ENCODE measurements at regions of chr3 and their contacts with region 1.

Region 1: DNA sequence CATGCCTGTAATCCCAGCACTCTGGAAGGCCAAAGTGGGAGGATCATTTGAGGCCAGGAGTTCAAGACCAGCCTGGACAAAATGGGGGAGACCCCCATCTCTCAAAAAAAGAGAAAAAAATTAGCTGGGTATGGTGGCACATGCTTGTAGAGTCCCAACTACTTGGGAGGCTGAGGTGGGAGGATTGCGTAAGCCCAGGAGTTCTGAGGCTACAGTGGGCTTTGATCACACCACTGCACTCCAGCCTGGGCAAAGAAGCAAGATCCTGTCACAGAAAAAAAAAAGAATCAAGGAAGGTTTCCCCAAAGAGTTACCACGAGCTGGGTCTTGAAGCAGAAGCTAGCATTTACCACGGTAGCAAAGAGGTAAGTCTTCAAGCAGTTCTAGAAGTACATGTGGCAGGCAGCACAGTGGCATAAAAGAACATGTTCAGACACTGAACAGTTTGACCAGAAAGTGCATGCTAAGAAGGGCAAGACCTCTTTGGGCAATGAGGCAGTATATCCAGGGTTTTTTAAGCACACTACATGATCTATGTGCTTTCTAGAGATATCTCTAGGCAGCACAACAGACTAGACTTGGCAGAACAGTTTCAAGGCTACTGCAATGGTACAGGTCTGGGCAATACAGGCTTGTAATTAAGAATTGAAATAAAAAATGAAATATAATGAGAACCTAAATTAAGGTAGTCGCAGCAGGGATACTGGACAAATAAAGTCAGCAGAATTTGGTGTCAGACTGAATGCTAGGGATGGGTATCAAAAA is 418.5 kb downstream of the SHQ1 start:
- DNase-seq: no peak
- H3K4me3 ChIP-seq: no peak overlapping the region
- H3K27ac ChIP-seq: no peak overlapping the region
- H3K4me1 ChIP-seq: peaks cover 0 to 74% (median 18%) of the 10 kb centered on the region in 4 donors
- H3K27me3 ChIP-seq: no peaks in the 10 kb centered on the region
- CTCF ChIP-seq: no peak
- EP300 ChIP-seq: no peak
- POLR2A ChIP-seq: no peak

Region 2: DNA sequence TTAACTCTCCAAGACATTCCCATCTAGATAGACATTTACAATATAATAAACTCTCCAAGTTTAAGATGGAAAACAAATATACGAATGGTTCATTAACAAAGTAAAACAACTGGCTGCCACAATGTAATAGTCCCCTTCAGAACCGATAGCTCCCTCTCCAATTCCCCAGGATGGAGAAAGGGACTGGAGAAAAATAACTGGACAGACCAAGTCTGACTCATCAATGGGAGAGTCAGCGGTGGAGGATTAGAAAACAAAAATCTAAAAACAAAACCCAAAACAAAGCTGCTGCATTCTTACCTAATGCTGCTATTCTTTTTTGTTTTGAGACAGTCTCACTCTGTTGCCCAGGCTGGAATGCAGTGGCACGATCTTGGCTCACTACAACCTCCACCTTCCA is 49.6 kb before region 1 on chr3:
- intact Hi-C with region 1: loop called (anchors 5 kb)
- DNase-seq: no peak
- H3K4me3 ChIP-seq: no peak overlapping the region
- H3K27ac ChIP-seq: no peak overlapping the region
- H3K4me1 ChIP-seq: peaks cover 0 to 38% (median 31%) of the 10 kb centered on the region in 4 donors
- H3K27me3 ChIP-seq: no peaks in the 10 kb centered on the region
- CTCF ChIP-seq: no peak
- EP300 ChIP-seq: no peak
- POLR2A ChIP-seq: no peak